ENCODE measurements at regions of chrX and their contacts with region 1.

Region 1: GRCh38 chrX:85454295-85454694 is 74.8 kb upstream of the POF1B start:
- DNase-seq: no peak
- H3K4me3 ChIP-seq: no peak overlapping the region
- H3K27ac ChIP-seq: no peak overlapping the region
- H3K4me1 ChIP-seq: no peaks in the 10 kb centered on the region
- H3K27me3 ChIP-seq: no peaks in the 10 kb centered on the region
- CTCF ChIP-seq: no peak

Region 2: GRCh38 chrX:85516131-85516530 is 61.8 kb after region 1 on chrX:
- intact Hi-C with region 1: loop called (anchors 10 kb)
- DNase-seq: no peak
- H3K4me3 ChIP-seq: no peak overlapping the region
- H3K27ac ChIP-seq: no peak overlapping the region
- H3K4me1 ChIP-seq: no peaks in the 10 kb centered on the region
- H3K27me3 ChIP-seq: no peaks in the 10 kb centered on the region
- CTCF ChIP-seq: no peak

Measured in ascending aorta (tissue), 2 donors.